Heart left ventricle (tissue), 16 donors: ENCODE measurements at regions of chr6 and their contacts with region 1.

Region 1: GRCh38 chr6:22929311-22929985 is 360.1 kb downstream of the HDGFL1 start:
- DNase-seq: peak in 1 of 5 donors; percentile 29
- ATAC-seq: peak; percentile 63 to 80 (median 66)
- H3K4me3 ChIP-seq: no peak overlapping the region
- H3K27ac ChIP-seq: peak overlapping the region in 9 of 12 donors; percentile 17 to 54 (median 43)
- H3K4me1 ChIP-seq: peaks cover 3 to 43% (median 31%) of the 10 kb centered on the region in 12 donors
- H3K27me3 ChIP-seq: no peaks in the 10 kb centered on the region
- CTCF ChIP-seq: no peak
- POLR2A ChIP-seq: no peak

Region 2: DNA sequence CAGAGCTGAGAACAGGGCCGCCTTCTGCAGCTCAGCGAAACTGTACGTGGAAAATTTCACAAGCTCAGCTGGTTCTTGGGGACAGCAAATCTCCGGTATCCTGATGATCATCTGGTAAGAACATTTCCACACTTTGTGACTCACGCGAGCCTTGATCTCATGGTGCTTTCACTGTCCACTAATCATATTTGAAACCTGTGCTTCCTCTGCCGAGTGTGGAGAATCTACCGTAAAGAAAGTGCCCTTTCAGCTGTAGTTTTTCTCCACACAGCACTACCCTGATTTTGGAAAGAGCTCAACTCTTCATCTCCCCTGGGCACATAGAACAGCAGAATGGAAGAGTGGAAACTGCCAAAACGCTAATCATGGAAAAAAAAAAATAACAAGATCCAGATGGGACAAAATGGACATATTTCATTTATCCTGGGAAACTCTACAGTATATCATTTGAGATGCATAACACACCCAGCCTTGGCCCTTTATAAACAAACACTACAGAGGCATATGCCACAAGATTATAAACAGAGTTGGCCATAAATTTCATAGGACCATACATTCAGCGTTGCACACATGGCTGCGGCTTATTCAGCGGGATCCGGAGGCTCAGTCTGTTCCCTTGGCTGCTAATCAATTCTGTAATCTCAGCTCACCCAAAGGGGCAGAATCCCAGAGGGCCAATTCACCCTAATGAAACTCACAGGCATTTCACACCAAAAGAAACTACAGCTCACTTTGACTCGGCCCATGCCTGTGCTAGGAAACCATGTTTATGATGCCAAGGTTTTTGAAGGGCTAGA is 74.4 kb after region 1 on chr6:
- intact Hi-C with region 1: no loop called
- DNase-seq: peak in 2 of 5 donors; percentile 10 to 39
- ATAC-seq: peak; percentile 58 to 85 (median 74)
- H3K4me3 ChIP-seq: peak overlapping the region in 6 of 12 donors; percentile 10 to 32 (median 22)
- H3K27ac ChIP-seq: peak overlapping the region in 2 of 12 donors; percentile 14 to 20
- H3K4me1 ChIP-seq: peaks cover 0 to 5% (median 0%) of the 10 kb centered on the region in 12 donors
- H3K27me3 ChIP-seq: no peaks in the 10 kb centered on the region
- CTCF ChIP-seq: no peak
- POLR2A ChIP-seq: no peak

Region 3: GRCh38 chr6:23446394-23447046 is 517.1 kb after region 1 on chr6:
- intact Hi-C with region 1: loop called in 1 of 10 experiments (anchors 10 kb)
- DNase-seq: no peak
- ATAC-seq: peak; percentile 61 to 89 (median 81)
- H3K4me3 ChIP-seq: no peak overlapping the region
- H3K27ac ChIP-seq: peak overlapping the region in 6 of 12 donors; percentile 2 to 66 (median 22)
- H3K4me1 ChIP-seq: peaks cover 0 to 21% (median 14%) of the 10 kb centered on the region in 12 donors
- H3K27me3 ChIP-seq: no peaks in the 10 kb centered on the region
- CTCF ChIP-seq: peak; percentile 30 to 70 (median 58)
- POLR2A ChIP-seq: no peak